PC-9 (cell line): ENCODE measurements at regions of chr12 and their contacts with region 1.

Region 1: GRCh38 chr12:95473884-95474659 is at the start of gene METAP2:
- DNase-seq: peak; percentile 91 to 96
- H3K4me3 ChIP-seq: peak within 1 kb of the TSS; percentile 94
- H3K27ac ChIP-seq: peak within 1 kb of the TSS; percentile 78
- H3K4me1 ChIP-seq: peaks cover 20% of the 10 kb centered on the region
- H3K27me3 ChIP-seq: no peaks in the 10 kb centered on the region
- CTCF ChIP-seq: no peak
- total RNA-seq, gene METAP2: 74.4 and 93.8 TPM in 2 replicates

Region 2: DNA sequence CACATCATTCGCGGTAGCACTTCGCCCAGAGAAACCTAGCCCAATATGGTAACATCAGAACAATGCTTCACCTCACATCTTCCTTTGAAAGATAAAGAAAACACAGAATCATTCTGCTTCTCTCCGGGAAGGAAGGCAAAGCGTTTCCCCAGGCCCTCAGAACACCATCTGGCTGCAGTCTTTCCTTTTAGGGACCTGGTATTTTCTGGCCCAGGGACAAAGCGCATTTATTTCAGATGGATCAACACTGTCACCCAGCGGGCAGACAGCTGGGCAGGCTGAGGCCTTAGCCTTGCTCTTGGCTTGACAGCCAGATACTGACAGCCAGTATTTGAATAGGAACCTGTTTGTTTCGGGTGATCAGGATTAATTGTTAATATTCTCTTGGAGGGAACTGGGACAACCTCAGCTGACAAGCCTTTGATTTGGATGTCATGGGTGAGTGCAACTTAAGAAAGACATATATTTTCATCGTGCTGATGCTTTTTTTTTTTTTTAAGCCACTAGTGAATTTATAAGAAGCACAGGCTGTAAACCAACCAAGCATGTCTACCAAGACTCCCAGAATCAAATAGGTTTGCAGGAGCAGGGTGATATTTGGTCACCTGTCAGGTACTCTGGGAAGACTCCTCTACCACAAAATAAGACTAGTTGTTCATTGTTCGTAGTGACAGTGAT is 137.5 kb before region 1 on chr12:
- CTCF ChIA-PET with region 1: no interaction called
- POLR2A ChIA-PET with region 1: interaction called, 3 read pairs
- intact Hi-C with region 1: loop called (anchors 10 kb)
- DNase-seq: peak; percentile 26 to 61
- H3K4me3 ChIP-seq: no peak overlapping the region
- H3K27ac ChIP-seq: no peak overlapping the region
- H3K4me1 ChIP-seq: peaks cover 8% of the 10 kb centered on the region
- H3K27me3 ChIP-seq: no peaks in the 10 kb centered on the region
- CTCF ChIP-seq: peak; percentile 68

Region 3: DNA sequence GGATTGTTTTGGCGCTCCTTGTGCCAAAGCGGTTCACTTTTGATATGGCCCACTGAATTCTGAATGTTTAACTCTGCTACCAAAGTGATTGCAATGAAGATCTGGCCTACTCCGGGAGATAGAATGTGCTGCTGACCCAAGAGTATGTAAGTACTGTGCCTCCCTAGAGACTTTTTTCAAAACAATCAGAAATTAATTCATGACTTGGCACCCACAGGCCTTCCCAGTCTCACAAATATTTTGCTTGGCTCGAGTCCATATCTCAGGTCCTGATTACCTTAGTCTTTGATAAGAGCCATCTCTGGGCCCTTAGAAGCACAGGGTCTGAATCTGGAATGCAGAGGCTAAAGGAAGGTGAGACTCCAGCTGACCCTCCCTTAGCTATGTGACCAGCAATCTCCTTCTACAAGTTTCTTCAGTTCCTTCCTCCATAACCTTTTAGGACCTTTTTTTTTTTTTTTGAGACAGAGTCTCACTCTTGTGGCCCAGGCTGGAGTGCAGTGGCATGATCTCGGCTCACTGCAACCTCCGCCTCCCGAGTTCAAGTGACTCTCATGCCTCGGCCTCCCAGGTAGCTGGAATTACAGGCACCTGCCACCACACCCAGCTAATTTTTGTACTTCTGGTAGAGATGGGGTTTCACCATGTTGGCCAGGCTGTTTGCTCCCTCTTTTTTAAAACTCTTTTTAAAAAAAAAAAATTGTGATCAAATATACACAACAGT is 49.6 kb before region 1 on chr12:
- CTCF ChIA-PET with region 1: interaction called, 10 read pairs
- POLR2A ChIA-PET with region 1: no interaction called
- intact Hi-C with region 1: no loop called
- DNase-seq: peak in 1 of 2 experiments; percentile 5
- H3K4me3 ChIP-seq: no peak overlapping the region
- H3K27ac ChIP-seq: no peak overlapping the region
- H3K4me1 ChIP-seq: no peaks in the 10 kb centered on the region; the same call in 1 of the 2 replicates
- H3K27me3 ChIP-seq: no peaks in the 10 kb centered on the region
- CTCF ChIP-seq: no peak

Region 4: GRCh38 chr12:95506707-95507523 is 32.8 kb after region 1 on chr12:
- CTCF ChIA-PET with region 1: no interaction called
- POLR2A ChIA-PET with region 1: no interaction called
- intact Hi-C with region 1: no loop called
- DNase-seq: no peak
- H3K4me3 ChIP-seq: no peak overlapping the region
- H3K27ac ChIP-seq: no peak overlapping the region
- H3K4me1 ChIP-seq: no peaks in the 10 kb centered on the region
- H3K27me3 ChIP-seq: no peaks in the 10 kb centered on the region
- CTCF ChIP-seq: no peak

Region 5: DNA sequence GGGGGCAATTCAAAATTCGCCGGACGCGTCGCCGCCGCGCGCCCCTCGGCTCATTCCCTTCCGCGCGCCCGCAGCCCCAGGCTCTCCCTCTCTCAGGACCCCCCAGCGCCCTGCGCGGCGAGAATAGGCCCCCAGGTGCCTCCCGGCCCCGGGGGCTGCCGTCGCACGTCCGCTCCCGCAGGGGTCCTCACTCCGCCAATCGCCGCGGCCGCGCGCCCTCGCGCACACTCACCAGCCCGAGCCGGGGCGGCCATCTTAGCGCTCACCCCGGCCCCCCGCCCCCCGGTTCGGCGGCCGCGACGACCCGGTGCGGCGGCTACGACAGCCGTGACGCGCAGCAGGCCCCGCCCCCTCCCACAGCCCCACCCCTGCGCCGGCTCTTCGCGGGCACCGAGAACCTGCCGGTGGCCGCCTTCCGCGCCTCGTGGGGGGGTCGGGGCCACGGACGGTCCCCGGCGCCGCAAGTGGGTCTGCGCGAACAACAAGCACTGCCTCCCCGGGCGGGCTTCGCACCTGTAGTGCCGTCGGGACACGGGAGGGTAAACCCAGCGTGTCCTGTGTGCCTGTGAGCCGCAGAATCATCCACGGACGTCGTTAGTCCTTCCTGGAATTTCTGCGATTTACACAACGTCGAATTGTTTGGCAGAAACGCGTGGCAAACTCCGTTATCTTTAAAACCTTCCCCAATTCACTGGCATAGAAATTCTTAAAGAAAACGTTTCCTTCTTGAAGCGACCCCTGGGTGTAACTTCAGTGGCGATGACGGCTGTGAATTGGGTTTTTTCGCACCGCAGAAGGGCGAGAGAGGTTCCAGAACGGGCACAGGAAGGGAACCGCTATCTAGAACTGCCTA is 74.7 kb after region 1 on chr12:
- CTCF ChIA-PET with region 1: no interaction called
- POLR2A ChIA-PET with region 1: no interaction called
- intact Hi-C with region 1: no loop called
- DNase-seq: no peak
- H3K4me3 ChIP-seq: peak overlapping the region; percentile 57
- H3K27ac ChIP-seq: no peak overlapping the region
- H3K4me1 ChIP-seq: no peaks in the 10 kb centered on the region; the same call in 1 of the 2 replicates
- H3K27me3 ChIP-seq: no peaks in the 10 kb centered on the region
- CTCF ChIP-seq: no peak